Astrocyte of the cerebellum (primary cell): ENCODE measurements at regions of chr9 and their contacts with region 1.

Region 1: GRCh38 chr9:16726718-16727451 is 143.6 kb downstream of the BNC2 start:
- DNase-seq: peak; percentile 55
- H3K4me3 ChIP-seq: peak overlapping the region; percentile 61
- CTCF ChIP-seq: no peak

Region 2: GRCh38 chr9:15873569-15874177 is 853.2 kb before region 1 on chr9:
- in situ Hi-C with region 1: loop called (anchors 25 kb)
- DNase-seq: peak; percentile 71
- H3K4me3 ChIP-seq: no peak overlapping the region
- CTCF ChIP-seq: peak; percentile 43

Region 3: DNA sequence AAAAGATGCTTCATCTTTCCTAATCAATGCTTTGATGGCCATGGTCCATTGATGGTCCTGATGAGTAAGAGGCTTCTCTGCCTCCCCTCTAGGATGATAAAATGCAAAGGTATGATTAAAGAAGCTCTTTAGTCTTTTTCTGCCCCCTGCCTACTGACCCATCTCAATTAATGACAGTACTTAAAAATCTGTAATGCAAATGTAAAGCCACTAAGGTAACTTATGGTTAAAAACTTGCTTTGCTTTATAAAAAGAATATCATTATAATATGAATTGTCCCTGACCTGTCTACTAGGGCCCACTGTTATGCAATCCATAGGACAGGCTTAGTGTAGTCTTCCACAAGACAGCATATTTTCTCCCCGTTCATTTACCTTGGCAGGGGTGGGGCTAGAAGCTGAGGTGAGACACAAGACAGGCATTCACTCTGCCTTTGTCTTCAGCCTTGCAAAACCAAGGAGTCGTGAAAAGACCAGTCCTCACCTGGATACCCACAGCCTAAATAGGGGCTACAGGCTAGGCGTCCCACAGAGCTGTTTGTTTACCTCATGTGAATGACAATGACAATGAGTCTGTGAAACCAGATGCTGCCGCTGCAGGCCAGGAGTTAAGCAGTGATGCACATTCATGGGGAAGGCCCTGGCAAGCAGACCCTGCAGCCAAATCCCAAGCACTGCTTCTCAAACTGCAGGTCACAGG is 83.2 kb after region 1 on chr9:
- in situ Hi-C with region 1: loop called (anchors 10 kb)
- DNase-seq: no peak
- H3K4me3 ChIP-seq: no peak overlapping the region
- CTCF ChIP-seq: no peak